Activated CD8-positive, alpha-beta T cell treated with anti-CD3 and anti-CD28 coated beads, Interleukin-2, amount 10 ng/mL, durations not matched to agents 7 days and 5 days (primary cell): ENCODE measurements at regions of chr15 and their contacts with region 1.

Region 1: DNA sequence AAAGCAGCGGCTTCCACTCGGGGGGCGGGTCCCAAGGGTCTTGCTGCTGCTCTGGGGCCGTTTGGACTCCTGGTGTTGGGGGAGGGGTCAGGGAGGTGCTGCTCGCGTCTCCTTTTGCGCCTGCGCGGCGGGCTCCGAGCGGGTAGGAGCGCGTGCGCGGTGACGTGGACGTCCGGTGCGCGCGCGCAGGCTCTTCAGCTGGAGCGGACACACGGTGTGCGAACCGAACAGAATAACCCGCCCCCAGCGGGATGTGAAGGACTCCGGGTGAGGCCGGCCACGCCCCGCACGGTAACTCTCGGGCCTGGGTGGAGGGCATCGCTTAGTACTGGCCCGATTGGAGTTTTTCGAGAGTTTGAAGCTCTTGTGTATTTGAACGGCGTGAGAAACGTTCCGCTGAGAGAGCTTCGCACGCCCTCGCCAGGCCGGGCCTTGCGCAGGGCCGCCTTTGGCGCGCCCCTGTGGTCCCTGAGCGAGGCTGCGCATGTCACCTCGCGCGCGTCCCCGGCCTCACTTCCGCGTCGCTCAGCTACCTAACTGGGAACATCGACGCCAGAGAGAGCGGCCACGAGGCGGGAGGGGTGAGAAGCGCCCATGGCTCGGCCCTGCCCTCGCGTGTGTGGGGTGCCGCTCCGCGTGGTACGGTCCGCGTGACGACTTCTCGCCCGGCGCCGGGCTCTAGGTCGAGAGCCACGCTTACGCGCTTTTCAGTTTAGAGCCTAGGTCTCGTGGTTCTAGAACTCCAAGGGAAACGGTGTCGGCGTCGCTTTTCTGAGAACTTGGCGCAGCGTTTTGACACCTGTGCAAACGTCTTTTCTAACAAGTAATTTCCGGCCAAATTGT is at the start of gene MGA:
- DNase-seq: peak; percentile 92
- ATAC-seq: peak; percentile 85
- H3K4me3 Mint-ChIP-seq: peak within 1 kb of the TSS; percentile 86
- H3K27ac Mint-ChIP-seq: peak within 1 kb of the TSS; percentile 93
- H3K4me1 Mint-ChIP-seq: peaks cover 34% of the 10 kb centered on the region
- H3K27me3 Mint-ChIP-seq: peaks cover 20% of the 10 kb centered on the region
- total RNA-seq, gene MGA: 36.1 to 37.1 TPM

Region 2: GRCh38 chr15:41695750-41696426 is 35.4 kb after region 1 on chr15:
- CTCF ChIA-PET with region 1: interaction called, 13 read pairs
- POLR2A ChIA-PET with region 1: interaction called, 9 read pairs
- DNase-seq: peak; percentile 75
- ATAC-seq: peak; percentile 98
- H3K4me3 Mint-ChIP-seq: peak overlapping the region; percentile 4
- H3K27ac Mint-ChIP-seq: peak overlapping the region; percentile 74
- H3K4me1 Mint-ChIP-seq: peaks cover 38% of the 10 kb centered on the region
- H3K27me3 Mint-ChIP-seq: no peaks in the 10 kb centered on the region